ENCODE measurements at regions of chr22 and their contacts with region 1.

Region 1: GRCh38 chr22:28935713-28936112 is 52.3 kb downstream of the ZNRF3 start:
- DNase-seq: no peak
- H3K4me3 ChIP-seq: no peak overlapping the region
- H3K27ac ChIP-seq: no peak overlapping the region
- H3K4me1 ChIP-seq: peaks cover 3 to 10% (median 6%) of the 10 kb centered on the region in 4 experiments
- H3K27me3 ChIP-seq: no peaks in the 10 kb centered on the region
- CTCF ChIP-seq: peak; percentile 16 to 57 (median 44)
- EP300 ChIP-seq: no peak
- POLR2A ChIP-seq: no peak
- RAD21 ChIP-seq: peak; percentile 15 to 44; a peak in 3 of 4 replicates

Region 2: GRCh38 chr22:28923826-28924732 is 11.6 kb before region 1 on chr22:
- CTCF ChIA-PET with region 1: interaction called, 22 read pairs
- POLR2A ChIA-PET with region 1: interaction called, 4 read pairs
- DNase-seq: no peak
- H3K4me3 ChIP-seq: no peak overlapping the region
- H3K27ac ChIP-seq: no peak overlapping the region
- H3K4me1 ChIP-seq: peaks cover 2 to 17% (median 13%) of the 10 kb centered on the region in 4 experiments; a peak in 4 of 7 replicates
- H3K27me3 ChIP-seq: no peaks in the 10 kb centered on the region
- CTCF ChIP-seq: no peak
- EP300 ChIP-seq: no peak
- POLR2A ChIP-seq: no peak
- RAD21 ChIP-seq: no peak

Region 3: GRCh38 chr22:28958611-28959010 is 22.9 kb after region 1 on chr22:
- CTCF ChIA-PET with region 1: interaction called, 11 read pairs
- POLR2A ChIA-PET with region 1: interaction called, 3 read pairs
- DNase-seq: no peak
- H3K4me3 ChIP-seq: no peak overlapping the region
- H3K27ac ChIP-seq: no peak overlapping the region
- H3K4me1 ChIP-seq: peaks cover 2 to 11% (median 4%) of the 10 kb centered on the region in 4 experiments
- H3K27me3 ChIP-seq: no peaks in the 10 kb centered on the region
- CTCF ChIP-seq: no peak
- EP300 ChIP-seq: no peak
- POLR2A ChIP-seq: no peak
- RAD21 ChIP-seq: no peak

Measured in H1 (cell line).